ENCODE measurements at regions of chr9 and their contacts with region 1.

Region 1: DNA sequence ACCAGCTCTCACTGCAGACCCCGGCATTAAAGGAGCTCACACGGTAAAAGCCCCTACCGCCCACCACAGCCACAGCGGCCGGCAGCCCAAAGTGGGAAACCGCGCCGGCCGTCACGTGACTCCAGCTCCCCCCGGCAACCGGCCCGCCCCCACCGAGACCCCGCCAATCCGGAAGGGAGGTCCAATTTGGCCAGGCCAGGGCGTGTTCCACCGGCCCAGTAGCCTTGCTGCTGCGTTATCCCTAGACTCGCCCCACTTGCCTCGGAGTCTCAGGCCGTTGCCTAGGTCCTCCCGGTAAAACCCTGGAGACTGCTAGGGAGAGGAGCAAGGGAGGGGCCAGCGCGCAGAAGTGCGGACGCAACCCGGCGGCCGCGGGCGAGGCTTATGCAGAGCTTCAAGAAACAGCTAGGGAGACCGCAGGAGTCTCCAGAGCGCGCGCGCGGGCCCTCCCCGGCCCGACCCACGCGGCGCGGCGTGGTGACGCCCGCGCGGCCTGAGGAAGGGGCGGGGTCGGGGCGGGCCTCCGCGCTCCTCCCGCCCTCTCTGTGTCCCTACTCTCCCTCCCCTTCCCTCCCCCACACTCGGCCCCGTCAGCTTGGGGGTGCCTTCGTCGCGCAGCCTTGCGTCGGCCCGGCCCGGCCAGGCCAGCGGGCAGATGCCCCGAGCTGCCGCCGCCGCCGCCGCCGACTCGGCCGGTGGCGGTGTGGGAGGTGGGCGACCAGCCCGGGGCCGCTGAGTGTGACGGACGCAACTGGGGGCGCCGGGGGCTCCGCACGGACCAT is at the start of gene RIC1:
- DNase-seq: peak; percentile 67
- ATAC-seq: peak; percentile 69
- H3K4me3 ChIP-seq: peak within 1 kb of the TSS; percentile 98
- H3K27ac ChIP-seq: peak within 1 kb of the TSS; percentile 78
- H3K4me1 ChIP-seq: peaks cover 33% of the 10 kb centered on the region
- H3K27me3 ChIP-seq: no peaks in the 10 kb centered on the region
- CTCF ChIP-seq: no peak
- EP300 ChIP-seq: 0 out of 4 replicates have a peak, but pooled peaks of 1 of the 2 experiments have one; percentile 9
- POLR2A ChIP-seq: peak; percentile 84
- RAD21 ChIP-seq: no peak
- polyA plus RNA-seq, gene RIC1: 6.2 to 7.1 TPM

Region 2: DNA sequence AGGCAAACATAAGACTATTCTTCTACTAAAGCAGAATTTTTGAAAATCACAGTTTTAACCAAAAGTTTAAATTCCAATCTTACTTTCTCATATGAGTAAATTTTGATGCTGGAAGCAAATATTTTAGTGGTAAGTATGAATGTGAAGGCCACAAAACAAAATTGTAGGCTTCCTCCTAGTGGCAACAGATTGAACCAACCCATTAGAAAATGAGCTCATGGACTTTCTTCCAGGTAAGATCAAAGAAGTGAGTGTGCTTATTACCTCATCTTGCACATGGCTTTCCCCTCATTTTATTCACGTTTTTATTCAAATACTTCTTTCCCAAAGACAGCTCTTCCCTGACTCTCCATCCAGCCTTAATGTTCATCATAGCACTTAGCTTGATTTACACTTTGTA is 307.7 kb before region 1 on chr9:
- CTCF ChIA-PET with region 1: no interaction called
- POLR2A ChIA-PET with region 1: no interaction called
- RAD21 ChIA-PET with region 1: no interaction called
- SMC1A ChIA-PET with region 1: no interaction called
- in situ Hi-C with region 1: no loop called
- intact Hi-C with region 1: no loop called
- DNase-seq: no peak
- ATAC-seq: peak; percentile 59; the same call in 2 of the 3 replicates
- H3K4me3 ChIP-seq: no peak overlapping the region
- H3K27ac ChIP-seq: no peak overlapping the region
- H3K4me1 ChIP-seq: no peaks in the 10 kb centered on the region
- H3K27me3 ChIP-seq: no peaks in the 10 kb centered on the region
- CTCF ChIP-seq: peak; percentile 17 to 29 (median 18); a peak in 4 of 6 replicates
- EP300 ChIP-seq: no peak
- POLR2A ChIP-seq: no peak
- RAD21 ChIP-seq: peak; percentile 32; the same call in 1 of the 2 replicates

Region 3: GRCh38 chr9:5608298-5609225 is 20.2 kb before region 1 on chr9:
- CTCF ChIA-PET with region 1: interaction called, 19 read pairs
- POLR2A ChIA-PET with region 1: interaction called, 19 read pairs
- RAD21 ChIA-PET with region 1: interaction called, 52 read pairs
- SMC1A ChIA-PET with region 1: interaction called, 26 read pairs
- in situ Hi-C with region 1: no loop called
- intact Hi-C with region 1: no loop called
- DNase-seq: no peak
- ATAC-seq: peak; percentile 89
- H3K4me3 ChIP-seq: peak overlapping the region; percentile 53
- H3K27ac ChIP-seq: peak overlapping the region; percentile 70
- H3K4me1 ChIP-seq: peaks cover 10% of the 10 kb centered on the region
- H3K27me3 ChIP-seq: no peaks in the 10 kb centered on the region
- CTCF ChIP-seq: peak in 1 of 3 experiments; percentile 32; a peak in 1 of 6 replicates
- EP300 ChIP-seq: no peak
- POLR2A ChIP-seq: 0 out of 2 replicates have a peak, but pooled peaks have one; percentile 38
- RAD21 ChIP-seq: peak; percentile 49

Region 4: GRCh38 chr9:5617749-5618148 is 11.0 kb before region 1 on chr9:
- CTCF ChIA-PET with region 1: interaction called, 3 read pairs
- POLR2A ChIA-PET with region 1: interaction called, 14 read pairs
- RAD21 ChIA-PET with region 1: interaction called, 17 read pairs
- SMC1A ChIA-PET with region 1: interaction called, 11 read pairs
- in situ Hi-C with region 1: no loop called
- intact Hi-C with region 1: no loop called
- DNase-seq: peak; percentile 92
- ATAC-seq: peak; percentile 96
- H3K4me3 ChIP-seq: peak overlapping the region; percentile 21; the same call in 1 of the 2 replicates
- H3K27ac ChIP-seq: peak overlapping the region; percentile 90
- H3K4me1 ChIP-seq: peaks cover 18% of the 10 kb centered on the region
- H3K27me3 ChIP-seq: no peaks in the 10 kb centered on the region
- CTCF ChIP-seq: no peak
- EP300 ChIP-seq: peak in 1 of 2 experiments; percentile 65; a peak in 2 of 4 replicates
- POLR2A ChIP-seq: no peak
- RAD21 ChIP-seq: no peak

Region 5: DNA sequence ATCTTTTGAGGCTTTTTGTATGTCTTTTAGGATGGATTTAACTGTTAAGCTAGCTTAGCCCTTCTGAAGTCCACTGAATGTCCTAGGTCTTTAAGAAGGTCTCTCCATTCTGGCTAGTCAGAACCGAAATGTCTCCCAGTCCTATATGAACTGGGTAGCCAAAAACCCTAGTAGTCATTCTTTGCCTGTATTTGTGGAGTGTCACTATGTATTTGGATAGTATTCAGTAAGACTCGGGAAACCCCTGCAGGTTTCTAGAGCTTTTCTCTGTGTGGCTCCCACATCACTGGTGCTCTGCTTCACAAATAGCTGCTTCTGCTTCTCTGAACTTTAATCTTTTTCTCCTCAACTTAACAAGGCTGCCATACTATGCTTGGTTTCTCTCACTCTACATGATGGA is 68.2 kb after region 1 on chr9:
- CTCF ChIA-PET with region 1: no interaction called
- POLR2A ChIA-PET with region 1: interaction called, 4 read pairs
- RAD21 ChIA-PET with region 1: interaction called, 4 read pairs
- SMC1A ChIA-PET with region 1: interaction called, 10 read pairs
- in situ Hi-C with region 1: no loop called
- intact Hi-C with region 1: loop called (anchors 5 kb)
- DNase-seq: peak; percentile 25
- ATAC-seq: peak; percentile 91
- H3K4me3 ChIP-seq: no peak overlapping the region
- H3K27ac ChIP-seq: peak overlapping the region; percentile 9
- H3K4me1 ChIP-seq: peaks cover 2% of the 10 kb centered on the region; the same call in 1 of the 2 replicates
- H3K27me3 ChIP-seq: no peaks in the 10 kb centered on the region
- CTCF ChIP-seq: no peak
- EP300 ChIP-seq: no peak
- POLR2A ChIP-seq: no peak
- RAD21 ChIP-seq: no peak

Region 6: GRCh38 chr9:5714501-5715401 is 86.0 kb after region 1 on chr9:
- CTCF ChIA-PET with region 1: interaction called, 6 read pairs
- POLR2A ChIA-PET with region 1: interaction called, 4 read pairs
- RAD21 ChIA-PET with region 1: interaction called, 4 read pairs
- SMC1A ChIA-PET with region 1: interaction called, 14 read pairs
- in situ Hi-C with region 1: no loop called
- intact Hi-C with region 1: loop called (anchors 5 kb)
- DNase-seq: no peak
- ATAC-seq: peak; percentile 19; the same call in 1 of the 3 replicates
- H3K4me3 ChIP-seq: no peak overlapping the region
- H3K27ac ChIP-seq: no peak overlapping the region
- H3K4me1 ChIP-seq: no peaks in the 10 kb centered on the region
- H3K27me3 ChIP-seq: no peaks in the 10 kb centered on the region
- CTCF ChIP-seq: peak; percentile 22 to 36 (median 23); a peak in 4 of 6 replicates
- EP300 ChIP-seq: no peak
- POLR2A ChIP-seq: no peak
- RAD21 ChIP-seq: peak; percentile 48